ENCODE measurements at regions of chr6 and their contacts with region 1.

Region 1: DNA sequence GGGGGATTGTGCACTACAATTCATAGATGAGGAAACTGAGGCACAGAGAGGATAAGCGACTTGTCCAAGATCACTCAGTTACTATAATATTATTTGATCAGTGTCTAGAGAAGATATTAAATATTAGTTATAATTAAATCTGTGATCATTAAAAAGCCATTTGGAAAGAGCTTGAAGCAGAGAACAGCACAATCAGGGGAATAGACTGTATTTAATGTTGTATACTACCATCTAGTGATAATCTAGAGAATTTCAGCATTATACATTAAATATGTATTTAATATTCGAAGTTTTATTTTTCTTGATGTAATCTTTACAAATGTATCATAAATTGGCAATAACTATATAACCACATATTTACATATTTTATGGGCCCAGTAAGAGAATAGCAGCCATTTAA is 20.1 kb upstream of the MTCL3 start:
- DNase-seq: no peak
- ATAC-seq: no peak

Region 2: GRCh38 chr6:127266892-127267645 is 272.2 kb before region 1 on chr6:
- intact Hi-C with region 1: no loop called
- DNase-seq: peak; percentile 86
- ATAC-seq: peak; percentile 86

Region 3: GRCh38 chr6:127302728-127303660 is 236.3 kb before region 1 on chr6:
- intact Hi-C with region 1: loop called (anchors 10 kb)
- DNase-seq: no peak
- ATAC-seq: peak; percentile 46

Region 4: DNA sequence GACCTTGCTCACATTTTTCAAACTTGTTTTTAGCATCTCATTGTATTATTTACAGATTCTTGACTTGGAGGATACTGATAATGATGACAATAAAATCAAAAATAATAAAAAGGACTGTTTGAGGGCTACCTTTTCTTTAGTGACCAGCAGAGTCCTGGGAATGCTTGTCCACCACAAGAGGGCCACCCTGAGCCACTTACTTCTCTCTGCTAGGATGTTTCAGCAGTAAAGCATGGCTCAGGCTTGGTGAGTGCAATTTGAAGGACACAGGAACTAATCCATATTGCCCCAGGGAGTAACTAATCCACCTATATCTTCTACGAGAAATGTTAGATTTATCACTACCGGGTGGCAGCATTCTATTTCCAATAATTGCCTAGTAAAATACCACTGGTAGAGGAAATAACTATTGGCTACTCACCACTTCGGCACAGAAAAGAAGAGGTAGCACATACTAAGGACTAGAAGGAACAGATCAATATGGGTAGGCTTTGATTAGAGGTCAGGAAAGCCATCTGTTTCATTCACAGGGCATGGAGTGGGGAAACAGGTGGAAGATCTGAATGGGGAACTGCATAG is 74.3 kb before region 1 on chr6:
- intact Hi-C with region 1: loop called (anchors 5 kb)
- DNase-seq: no peak
- ATAC-seq: peak; percentile 89

Region 5: GRCh38 chr6:127510876-127511275 is 28.4 kb before region 1 on chr6:
- intact Hi-C with region 1: no loop called
- DNase-seq: no peak
- ATAC-seq: no peak

Region 6: GRCh38 chr6:127786109-127786508 is 246.8 kb after region 1 on chr6:
- intact Hi-C with region 1: no loop called
- DNase-seq: no peak
- ATAC-seq: no peak

Measured in Right ventricle myocardium inferior (tissue), 1 donor.